ENCODE measurements at regions of chr6 and their contacts with region 1.

Region 1: GRCh38 chr6:106097411-106098231 is 11.5 kb downstream of the PRDM1 start:
- DNase-seq: peak; percentile 83 to 92 (median 89)
- H3K4me3 ChIP-seq: peak overlapping the region; percentile 89 to 94
- H3K4me3 Mint-ChIP-seq: peak overlapping the region; percentile 95 to 99 (median 97)
- H3K27ac ChIP-seq: peak overlapping the region; percentile 69
- H3K27ac Mint-ChIP-seq: peak overlapping the region; percentile 94 to 98 (median 98)
- H3K4me1 ChIP-seq: peaks cover 71% of the 10 kb centered on the region
- H3K4me1 Mint-ChIP-seq: peaks cover 46 to 86% (median 60%) of the 10 kb centered on the region in 4 donors
- H3K27me3 ChIP-seq: no peaks in the 10 kb centered on the region
- H3K27me3 Mint-ChIP-seq: no peaks in the 10 kb centered on the region

Region 2: DNA sequence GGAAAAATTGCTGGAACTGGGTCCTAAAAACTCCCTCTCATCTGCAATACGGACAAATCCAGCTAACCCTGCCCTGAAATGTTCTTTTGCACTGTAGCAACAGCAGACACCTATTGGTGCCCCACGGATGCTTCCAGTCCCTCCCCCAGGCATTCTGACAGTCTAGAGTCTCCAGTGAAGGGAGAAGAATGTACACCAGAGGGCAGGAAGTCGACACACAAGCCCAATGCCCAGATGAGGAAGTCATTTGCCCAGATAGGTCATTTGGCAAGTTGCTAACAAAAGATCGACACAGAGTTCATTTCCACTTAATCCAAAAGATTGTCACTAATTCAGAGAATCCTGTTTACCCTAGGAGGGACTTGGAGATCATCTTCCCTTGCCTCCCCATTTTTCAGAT is 304.5 kb before region 1 on chr6:
- CTCF ChIA-PET with region 1: no interaction called
- POLR2A ChIA-PET with region 1: no interaction called
- intact Hi-C with region 1: loop called (anchors 5 kb)
- DNase-seq: peak in 2 of 5 donors; percentile 22 to 27
- H3K4me3 ChIP-seq: no peak overlapping the region
- H3K4me3 Mint-ChIP-seq: no peak overlapping the region
- H3K27ac ChIP-seq: no peak overlapping the region
- H3K27ac Mint-ChIP-seq: peak overlapping the region in 3 of 7 donors; percentile 6 to 46 (median 8)
- H3K4me1 ChIP-seq: peaks cover 28% of the 10 kb centered on the region
- H3K4me1 Mint-ChIP-seq: peaks cover 8 to 24% (median 15%) of the 10 kb centered on the region in 4 donors
- H3K27me3 ChIP-seq: no peaks in the 10 kb centered on the region
- H3K27me3 Mint-ChIP-seq: no peaks in the 10 kb centered on the region

Region 3: GRCh38 chr6:106114492-106115265 is 17.1 kb after region 1 on chr6:
- CTCF ChIA-PET with region 1: interaction called, 19 read pairs
- POLR2A ChIA-PET with region 1: interaction called, 178 read pairs
- intact Hi-C with region 1: loop called (anchors 1 kb)
- DNase-seq: peak in 3 of 5 donors; percentile 33 to 64 (median 39)
- H3K4me3 ChIP-seq: peak overlapping the region in 1 of 2 donors; percentile 30
- H3K4me3 Mint-ChIP-seq: peak overlapping the region; percentile 64 to 86 (median 75)
- H3K27ac ChIP-seq: peak overlapping the region; percentile 41
- H3K27ac Mint-ChIP-seq: peak overlapping the region; percentile 54 to 90 (median 85)
- H3K4me1 ChIP-seq: peaks cover 88% of the 10 kb centered on the region
- H3K4me1 Mint-ChIP-seq: peaks cover 65 to 98% (median 81%) of the 10 kb centered on the region in 4 donors
- H3K27me3 ChIP-seq: no peaks in the 10 kb centered on the region
- H3K27me3 Mint-ChIP-seq: peaks cover 0 to 2% of the 10 kb centered on the region in 2 donors

Region 4: GRCh38 chr6:106134087-106134781 is 36.6 kb after region 1 on chr6:
- CTCF ChIA-PET with region 1: no interaction called
- POLR2A ChIA-PET with region 1: no interaction called
- intact Hi-C with region 1: no loop called
- DNase-seq: no peak
- H3K4me3 ChIP-seq: no peak overlapping the region
- H3K4me3 Mint-ChIP-seq: no peak overlapping the region
- H3K27ac ChIP-seq: no peak overlapping the region
- H3K27ac Mint-ChIP-seq: peak overlapping the region in 2 of 7 donors; percentile 58 to 71
- H3K4me1 ChIP-seq: no peaks in the 10 kb centered on the region
- H3K4me1 Mint-ChIP-seq: peaks cover 3 to 18% (median 8%) of the 10 kb centered on the region in 4 donors
- H3K27me3 ChIP-seq: no peaks in the 10 kb centered on the region
- H3K27me3 Mint-ChIP-seq: no peaks in the 10 kb centered on the region

Region 5: GRCh38 chr6:106163446-106163965 is 65.9 kb after region 1 on chr6:
- CTCF ChIA-PET with region 1: interaction called, 4 read pairs
- POLR2A ChIA-PET with region 1: interaction called, 39 read pairs
- intact Hi-C with region 1: loop called (anchors 2 kb)
- DNase-seq: peak; percentile 44 to 73 (median 51)
- H3K4me3 ChIP-seq: peak overlapping the region in 1 of 2 donors; percentile 27
- H3K4me3 Mint-ChIP-seq: peak overlapping the region; percentile 46 to 78 (median 68)
- H3K27ac ChIP-seq: peak overlapping the region; percentile 57
- H3K27ac Mint-ChIP-seq: peak overlapping the region; percentile 74 to 98 (median 93)
- H3K4me1 ChIP-seq: peaks cover 32% of the 10 kb centered on the region
- H3K4me1 Mint-ChIP-seq: peaks cover 30 to 56% (median 42%) of the 10 kb centered on the region in 4 donors
- H3K27me3 ChIP-seq: no peaks in the 10 kb centered on the region
- H3K27me3 Mint-ChIP-seq: no peaks in the 10 kb centered on the region

Region 6: GRCh38 chr6:106257195-106257594 is 159.6 kb after region 1 on chr6:
- CTCF ChIA-PET with region 1: no interaction called
- POLR2A ChIA-PET with region 1: no interaction called
- intact Hi-C with region 1: no loop called
- DNase-seq: no peak
- H3K4me3 ChIP-seq: no peak overlapping the region
- H3K4me3 Mint-ChIP-seq: no peak overlapping the region
- H3K27ac ChIP-seq: no peak overlapping the region
- H3K27ac Mint-ChIP-seq: no peak overlapping the region
- H3K4me1 ChIP-seq: no peaks in the 10 kb centered on the region
- H3K4me1 Mint-ChIP-seq: peaks cover 11 to 28% (median 17%) of the 10 kb centered on the region in 4 donors
- H3K27me3 ChIP-seq: no peaks in the 10 kb centered on the region
- H3K27me3 Mint-ChIP-seq: no peaks in the 10 kb centered on the region

Region 7: GRCh38 chr6:106325336-106326178 is 227.9 kb after region 1 on chr6 and contains the start of gene ATG5:
- CTCF ChIA-PET with region 1: no interaction called
- POLR2A ChIA-PET with region 1: interaction called, 3 read pairs
- intact Hi-C with region 1: loop called (anchors 2 kb)
- DNase-seq: peak; percentile 99 to 100 (median 99)
- H3K4me3 ChIP-seq: peak within 1 kb of the TSS; percentile 87 to 97
- H3K4me3 Mint-ChIP-seq: peak within 1 kb of the TSS; percentile 94 to 100 (median 99)
- H3K27ac ChIP-seq: peak within 1 kb of the TSS; percentile 85
- H3K27ac Mint-ChIP-seq: peak within 1 kb of the TSS; percentile 96 to 99 (median 98)
- H3K4me1 ChIP-seq: peaks cover 33% of the 10 kb centered on the region
- H3K4me1 Mint-ChIP-seq: peaks cover 35 to 48% (median 44%) of the 10 kb centered on the region in 4 donors
- H3K27me3 ChIP-seq: no peaks in the 10 kb centered on the region
- H3K27me3 Mint-ChIP-seq: peaks cover 5 to 7% of the 10 kb centered on the region in 2 donors
- total RNA-seq, gene ATG5: 26.8 to 30.2 TPM